ENCODE measurements at regions of chr16 and their contacts with region 1.

Region 1: DNA sequence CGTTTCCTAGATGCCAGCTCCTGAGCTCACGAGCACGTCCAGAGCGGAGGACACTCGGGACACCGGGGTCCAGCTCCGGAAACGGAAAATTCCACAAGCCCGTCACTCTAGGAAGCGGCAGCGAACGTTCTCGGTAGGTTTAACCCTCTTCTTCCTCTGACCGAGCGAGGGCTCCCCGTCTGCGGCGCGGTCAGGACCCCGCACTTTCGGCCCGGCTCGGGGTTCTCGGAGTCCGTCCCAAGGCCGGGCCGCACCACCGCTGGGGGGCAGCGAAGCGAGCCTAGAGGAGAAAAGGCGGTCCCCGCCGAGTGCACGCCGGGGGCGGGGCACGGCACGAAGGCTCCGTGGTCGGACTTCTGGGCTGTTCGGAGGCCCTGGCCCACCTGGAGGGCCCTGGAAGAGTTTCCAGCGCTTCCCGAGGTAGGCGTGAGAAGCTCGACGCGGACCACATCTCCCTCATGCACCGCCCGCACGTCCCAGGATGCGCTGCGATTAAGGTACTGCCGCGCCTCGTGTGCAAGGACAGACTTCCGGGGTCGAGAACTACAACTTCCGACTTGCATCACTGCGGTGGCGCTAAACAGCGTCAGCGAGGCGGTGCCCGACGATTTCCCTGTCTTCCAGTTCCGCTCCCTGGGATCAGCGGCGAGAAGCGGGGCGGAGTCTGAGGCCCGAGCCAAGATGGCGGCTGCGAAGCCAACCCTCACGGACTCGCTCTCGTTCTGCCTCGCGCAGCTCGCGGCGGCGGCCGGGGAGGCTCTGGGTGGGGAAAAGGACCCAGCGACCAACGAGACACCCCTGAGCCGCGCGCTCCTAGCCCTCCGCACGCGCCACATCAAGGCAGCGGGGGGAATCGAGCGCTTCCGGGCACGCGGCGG is at the start of gene ARMC5:
- DNase-seq: peak in 7 of 9 donors; percentile 92 to 99 (median 98)
- ATAC-seq: peak; percentile 81
- H3K4me3 ChIP-seq: peak within 1 kb of the TSS; percentile 87
- H3K4me3 Mint-ChIP-seq: peak within 1 kb of the TSS; percentile 88 to 96 (median 94)
- H3K27ac ChIP-seq: peak within 1 kb of the TSS; percentile 95
- H3K27ac Mint-ChIP-seq: peak within 1 kb of the TSS; percentile 94 to 99 (median 98)
- H3K4me1 ChIP-seq: peaks cover 32 to 37% of the 10 kb centered on the region in 2 donors
- H3K4me1 Mint-ChIP-seq: peaks cover 26 to 51% (median 46%) of the 10 kb centered on the region in 7 donors
- H3K27me3 ChIP-seq: no peaks in the 10 kb centered on the region
- H3K27me3 Mint-ChIP-seq: no peaks in the 10 kb centered on the region
- total RNA-seq, gene ARMC5: 8.5 to 14.4 (median 11.5) TPM

Region 2: GRCh38 chr16:30902029-30902972 is 556.8 kb before region 1 on chr16:
- CTCF ChIA-PET with region 1: no interaction called
- POLR2A ChIA-PET with region 1: interaction called, 10 read pairs
- intact Hi-C with region 1: no loop called
- DNase-seq: peak in 8 of 9 donors; percentile 38 to 76 (median 61)
- ATAC-seq: peak; percentile 92
- H3K4me3 ChIP-seq: peak overlapping the region; percentile 65
- H3K4me3 Mint-ChIP-seq: peak overlapping the region; percentile 91 to 99 (median 96)
- H3K27ac ChIP-seq: peak overlapping the region; percentile 80
- H3K27ac Mint-ChIP-seq: peak overlapping the region; percentile 90 to 99 (median 98)
- H3K4me1 ChIP-seq: peaks cover 26 to 35% of the 10 kb centered on the region in 2 donors
- H3K4me1 Mint-ChIP-seq: peaks cover 18 to 43% (median 32%) of the 10 kb centered on the region in 7 donors
- H3K27me3 ChIP-seq: no peaks in the 10 kb centered on the region
- H3K27me3 Mint-ChIP-seq: no peaks in the 10 kb centered on the region

Region 3: DNA sequence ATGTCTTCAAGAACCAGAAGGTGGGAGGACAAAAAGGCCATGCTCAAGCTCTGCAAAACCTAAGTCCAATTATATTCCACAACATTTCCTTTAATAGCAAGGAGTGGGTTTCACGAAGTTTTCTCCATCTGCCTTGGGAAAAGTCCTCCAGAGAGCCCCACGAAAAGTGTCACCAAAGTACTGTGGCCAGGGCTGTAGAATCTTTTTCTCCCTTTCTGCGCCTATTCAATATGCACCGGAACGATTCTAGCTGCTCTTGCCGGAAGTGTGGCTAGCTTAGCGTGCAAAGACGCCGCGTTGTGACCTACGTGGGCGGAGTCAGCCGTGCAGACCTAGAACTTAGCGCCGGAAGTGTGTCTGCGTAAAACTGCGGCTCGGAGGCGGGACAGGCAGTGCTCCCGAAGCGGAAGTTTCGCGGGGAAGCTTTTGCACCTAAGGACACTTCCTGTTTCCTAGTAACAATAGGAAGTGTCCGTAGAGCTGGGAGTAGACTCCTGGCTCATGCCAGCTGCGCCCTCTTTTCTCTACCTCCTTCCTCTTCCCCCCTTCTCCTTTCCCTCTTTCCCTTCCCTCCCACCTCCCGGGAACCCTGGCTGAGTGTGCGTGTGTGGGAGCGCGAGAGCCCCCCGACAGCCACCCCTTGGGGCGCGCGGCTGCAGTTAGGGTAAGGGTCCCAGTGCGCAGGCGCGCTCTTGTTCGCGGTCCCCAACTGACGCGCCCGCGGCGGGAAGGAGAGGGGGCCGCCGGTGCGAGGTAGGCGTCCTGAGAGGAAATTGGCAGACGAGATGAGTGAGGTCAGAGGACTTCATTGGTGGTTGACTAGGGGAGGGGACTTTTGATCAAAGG is 384.9 kb before region 1 on chr16 and contains the starts of genes ZNF646 and ZNF668:
- CTCF ChIA-PET with region 1: no interaction called
- POLR2A ChIA-PET with region 1: interaction called, 11 read pairs
- intact Hi-C with region 1: loop called (anchors 1 kb)
- DNase-seq: peak; percentile 84 to 99 (median 96)
- ATAC-seq: peak; percentile 90
- H3K4me3 ChIP-seq: peak within 1 kb of the TSS; percentile 89
- H3K4me3 Mint-ChIP-seq: peak within 1 kb of the TSS; percentile 85 to 99 (median 96)
- H3K27ac ChIP-seq: peak within 1 kb of the TSS; percentile 91
- H3K27ac Mint-ChIP-seq: peak within 1 kb of the TSS; percentile 92 to 98 (median 97)
- H3K4me1 ChIP-seq: peaks cover 9 to 18% of the 10 kb centered on the region in 2 donors
- H3K4me1 Mint-ChIP-seq: peaks cover 32 to 48% (median 36%) of the 10 kb centered on the region in 7 donors
- H3K27me3 ChIP-seq: no peaks in the 10 kb centered on the region
- H3K27me3 Mint-ChIP-seq: no peaks in the 10 kb centered on the region
- total RNA-seq, gene ZNF646: 22.2 to 49.1 (median 30.4) TPM
- total RNA-seq, gene ZNF668: 10.7 to 15.2 (median 12.6) TPM

Region 4: DNA sequence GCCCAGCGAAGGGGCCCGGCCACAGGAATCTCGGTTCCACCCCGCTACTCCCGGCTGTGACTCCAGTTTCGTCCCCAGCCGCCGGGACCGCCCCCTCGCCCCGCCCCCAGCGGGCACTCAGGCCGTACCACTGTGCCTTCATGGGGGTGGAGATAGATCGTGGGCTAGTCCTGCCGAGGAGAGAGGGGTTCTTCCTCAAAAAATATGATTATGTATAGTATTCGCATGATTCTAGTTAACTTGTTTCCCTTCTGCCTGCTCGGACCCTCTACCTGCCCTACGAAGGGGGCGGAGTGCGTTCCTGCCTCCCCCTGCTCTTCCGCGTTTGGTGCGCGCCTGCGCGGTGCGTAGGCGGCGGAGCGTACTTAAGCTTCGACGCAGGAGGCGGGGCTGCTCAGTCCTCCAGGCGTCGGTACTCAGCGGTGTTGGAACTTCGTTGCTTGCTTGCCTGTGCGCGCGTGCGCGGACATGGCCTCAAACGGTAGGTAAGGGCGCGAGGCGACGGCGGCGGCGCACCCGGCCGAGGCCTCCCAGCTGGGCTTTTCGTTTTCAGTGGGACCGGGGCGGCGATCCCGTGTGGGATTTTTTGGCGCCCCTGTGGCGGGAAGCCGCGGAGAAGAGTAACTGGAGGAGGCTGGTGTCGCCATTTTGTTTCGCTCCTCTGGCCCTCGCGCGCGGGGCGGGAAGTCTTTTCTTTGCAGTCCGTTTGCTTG is 279.2 kb before region 1 on chr16 and contains the start of gene FUS:
- CTCF ChIA-PET with region 1: no interaction called
- POLR2A ChIA-PET with region 1: interaction called, 8 read pairs
- intact Hi-C with region 1: loop called (anchors 1 kb)
- DNase-seq: peak; percentile 88 to 97 (median 95)
- ATAC-seq: peak; percentile 87
- H3K4me3 ChIP-seq: peak within 1 kb of the TSS; percentile 76
- H3K4me3 Mint-ChIP-seq: peak within 1 kb of the TSS; percentile 92 to 99 (median 96)
- H3K27ac ChIP-seq: peak within 1 kb of the TSS; percentile 90
- H3K27ac Mint-ChIP-seq: peak within 1 kb of the TSS; percentile 96 to 100 (median 99)
- H3K4me1 ChIP-seq: peaks cover 56% of the 10 kb centered on the region in 2 donors
- H3K4me1 Mint-ChIP-seq: peaks cover 49 to 72% (median 56%) of the 10 kb centered on the region in 7 donors
- H3K27me3 ChIP-seq: no peaks in the 10 kb centered on the region
- H3K27me3 Mint-ChIP-seq: peaks cover 0 to 3% (median 0%) of the 10 kb centered on the region in 5 donors
- total RNA-seq, gene FUS: 597 to 956 (median 714) TPM

Region 5: DNA sequence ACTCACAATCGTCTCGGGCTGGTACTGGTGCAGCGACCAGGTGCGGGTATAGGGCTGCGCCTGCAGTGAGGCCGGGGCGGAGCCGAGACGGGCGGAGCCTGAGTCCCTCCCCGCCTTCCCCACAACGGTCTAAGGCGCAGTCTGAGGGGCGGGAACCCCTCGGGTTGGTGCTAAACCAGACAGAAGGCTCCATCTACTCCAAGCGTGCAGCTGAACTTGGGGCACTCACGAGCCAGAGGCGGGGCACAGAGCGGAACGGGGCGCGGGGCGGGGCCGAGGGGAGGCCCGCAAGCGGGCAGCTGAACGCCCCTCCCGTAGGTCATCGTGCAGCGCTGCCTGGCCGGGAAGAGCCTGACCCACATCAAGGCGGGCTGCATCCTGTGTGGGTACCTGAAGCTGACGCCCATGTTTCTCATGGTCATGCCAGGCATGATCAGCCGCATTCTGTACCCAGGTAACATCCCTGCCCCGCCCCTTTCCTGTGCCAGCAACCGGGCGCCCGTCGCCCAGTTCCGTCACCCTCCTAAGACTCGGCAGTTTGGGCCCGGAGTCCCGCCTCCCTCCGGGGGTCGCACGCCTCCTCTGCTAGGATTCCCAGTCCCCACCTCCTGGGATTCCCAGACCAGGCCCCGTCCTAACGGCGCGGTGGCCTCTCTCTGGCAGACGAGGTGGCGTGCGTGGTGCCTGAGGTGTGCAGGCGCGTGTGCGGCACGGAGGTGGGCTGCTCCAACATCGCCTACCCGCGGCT is 28.8 kb after region 1 on chr16:
- CTCF ChIA-PET with region 1: no interaction called
- POLR2A ChIA-PET with region 1: interaction called, 18 read pairs
- intact Hi-C with region 1: loop called in 1 of 2 experiments (anchors 1 kb)
- DNase-seq: peak; percentile 55 to 79 (median 74)
- ATAC-seq: peak; percentile 92
- H3K4me3 ChIP-seq: peak overlapping the region; percentile 89
- H3K4me3 Mint-ChIP-seq: peak overlapping the region; percentile 89 to 95 (median 92)
- H3K27ac ChIP-seq: peak overlapping the region; percentile 62
- H3K27ac Mint-ChIP-seq: peak overlapping the region in 8 of 9 donors; percentile 51 to 90 (median 84)
- H3K4me1 ChIP-seq: no peaks in the 10 kb centered on the region
- H3K4me1 Mint-ChIP-seq: peaks cover 5 to 24% (median 13%) of the 10 kb centered on the region in 7 donors
- H3K27me3 ChIP-seq: no peaks in the 10 kb centered on the region
- H3K27me3 Mint-ChIP-seq: peaks cover 0 to 17% (median 0%) of the 10 kb centered on the region in 5 donors

Region 6: GRCh38 chr16:31713071-31713944 is 254.2 kb after region 1 on chr16:
- CTCF ChIA-PET with region 1: no interaction called
- POLR2A ChIA-PET with region 1: interaction called, 4 read pairs
- intact Hi-C with region 1: loop called (anchors 1 kb)
- DNase-seq: peak; percentile 74 to 91 (median 87)
- ATAC-seq: peak; percentile 88
- H3K4me3 ChIP-seq: peak overlapping the region; percentile 98
- H3K4me3 Mint-ChIP-seq: peak overlapping the region; percentile 78 to 100 (median 99)
- H3K27ac ChIP-seq: peak overlapping the region; percentile 88
- H3K27ac Mint-ChIP-seq: peak overlapping the region; percentile 97 to 100 (median 98)
- H3K4me1 ChIP-seq: peaks cover 15 to 34% of the 10 kb centered on the region in 2 donors
- H3K4me1 Mint-ChIP-seq: peaks cover 34 to 68% (median 62%) of the 10 kb centered on the region in 7 donors
- H3K27me3 ChIP-seq: no peaks in the 10 kb centered on the region
- H3K27me3 Mint-ChIP-seq: no peaks in the 10 kb centered on the region